ENCODE measurements at regions of chr9 and their contacts with region 1.

Region 1: DNA sequence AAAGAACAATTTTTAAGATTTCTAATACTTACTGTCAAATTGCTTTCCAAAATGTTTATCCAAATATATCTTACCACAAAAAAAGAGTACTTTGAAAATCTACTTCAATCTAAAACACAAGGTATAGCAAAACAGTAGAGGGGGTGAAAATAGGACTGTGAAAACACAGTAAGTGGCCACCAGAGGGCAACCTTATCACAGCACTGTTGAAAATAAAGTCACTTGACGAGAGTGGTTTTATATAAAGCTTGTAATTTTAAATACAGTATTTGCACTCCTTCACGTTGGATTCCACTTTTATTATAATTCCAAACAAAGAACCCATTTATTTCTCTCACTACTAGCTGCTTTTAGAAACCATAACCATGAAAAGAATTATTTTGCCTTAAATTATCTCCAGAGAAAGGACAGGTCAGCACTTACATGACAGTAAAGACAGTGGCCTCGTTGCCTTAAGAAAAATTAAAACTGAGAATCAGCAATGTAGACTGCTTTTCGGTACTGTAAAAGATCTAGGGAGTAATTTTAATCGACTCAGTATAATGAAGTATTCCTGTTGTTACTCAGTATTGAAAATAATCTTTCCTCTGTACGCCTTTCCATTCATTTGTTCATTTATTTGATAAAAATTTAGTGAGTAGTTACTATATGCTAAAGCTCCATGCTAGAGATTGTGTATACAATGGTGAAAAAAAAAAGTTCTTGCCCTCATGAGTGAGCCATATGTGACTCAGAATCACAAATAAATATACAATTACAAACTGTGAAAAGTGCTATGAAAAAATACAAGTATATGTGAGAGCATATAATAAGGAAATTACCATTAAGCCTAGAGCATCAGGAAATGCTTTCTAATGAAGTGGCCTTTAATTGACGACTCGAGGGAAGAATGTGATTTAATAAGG is 40.0 kb upstream of the CDK5RAP2 start:
- DNase-seq: peak; percentile 81
- H3K4me3 ChIP-seq: no peak overlapping the region
- H3K27ac ChIP-seq: no peak overlapping the region
- H3K4me1 ChIP-seq: no peaks in the 10 kb centered on the region
- H3K27me3 ChIP-seq: no peaks in the 10 kb centered on the region
- CTCF ChIP-seq: peak; percentile 67 to 68
- POLR2A ChIP-seq: no peak

Region 2: DNA sequence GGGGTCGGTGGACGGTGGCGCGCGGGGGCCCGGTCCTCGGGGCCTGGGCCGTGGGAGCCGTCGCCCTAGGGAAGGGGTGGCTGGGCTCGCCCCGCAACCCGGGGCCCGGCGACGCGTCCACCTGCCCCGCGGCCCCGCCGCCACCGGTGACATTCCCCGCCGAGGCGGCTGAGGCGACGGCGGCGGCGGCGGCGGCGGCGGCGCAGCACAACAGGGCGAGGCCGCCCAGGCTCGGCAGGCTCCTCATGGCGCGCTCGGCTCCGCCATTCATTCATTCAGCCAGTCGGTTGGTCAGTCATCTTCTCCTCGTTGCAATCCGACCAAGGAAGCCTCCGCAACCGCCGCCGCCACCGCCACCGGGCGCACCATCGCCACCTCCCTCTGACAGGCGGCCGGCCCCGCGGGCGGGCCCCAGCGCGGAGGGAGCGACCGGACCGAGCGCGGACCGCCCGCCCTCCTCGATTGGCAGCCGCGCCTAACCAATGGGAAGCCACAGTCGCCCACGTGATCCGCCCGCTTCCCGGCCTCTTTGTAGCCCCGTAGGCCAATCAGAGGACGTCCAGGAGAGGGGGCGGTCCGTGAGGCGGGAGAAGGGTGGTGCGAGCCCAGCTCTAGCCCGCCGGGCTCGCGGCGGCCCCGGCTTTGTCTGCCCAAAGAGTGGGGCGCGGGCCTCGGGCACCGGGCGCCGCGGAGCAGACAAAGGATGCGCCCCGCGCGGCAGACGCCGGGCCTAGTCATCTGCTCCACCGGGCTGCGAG is 94.3 kb after region 1 on chr9 and contains the start of gene MEGF9:
- CTCF ChIA-PET with region 1: interaction called, 28 read pairs
- POLR2A ChIA-PET with region 1: interaction called, 3 read pairs
- dilution Hi-C with region 1: no loop called
- intact Hi-C with region 1: loop called (anchors 5 kb)
- DNase-seq: peak; percentile 98
- H3K4me3 ChIP-seq: peak within 1 kb of the TSS; percentile 65 to 84 (median 67)
- H3K27ac ChIP-seq: peak within 1 kb of the TSS; percentile 68
- H3K4me1 ChIP-seq: peaks cover 21% of the 10 kb centered on the region
- H3K27me3 ChIP-seq: no peaks in the 10 kb centered on the region
- CTCF ChIP-seq: no peak
- POLR2A ChIP-seq: peak; percentile 81
- total RNA-seq, gene MEGF9: 11.1 and 13.0 TPM in 2 replicates

Region 3: DNA sequence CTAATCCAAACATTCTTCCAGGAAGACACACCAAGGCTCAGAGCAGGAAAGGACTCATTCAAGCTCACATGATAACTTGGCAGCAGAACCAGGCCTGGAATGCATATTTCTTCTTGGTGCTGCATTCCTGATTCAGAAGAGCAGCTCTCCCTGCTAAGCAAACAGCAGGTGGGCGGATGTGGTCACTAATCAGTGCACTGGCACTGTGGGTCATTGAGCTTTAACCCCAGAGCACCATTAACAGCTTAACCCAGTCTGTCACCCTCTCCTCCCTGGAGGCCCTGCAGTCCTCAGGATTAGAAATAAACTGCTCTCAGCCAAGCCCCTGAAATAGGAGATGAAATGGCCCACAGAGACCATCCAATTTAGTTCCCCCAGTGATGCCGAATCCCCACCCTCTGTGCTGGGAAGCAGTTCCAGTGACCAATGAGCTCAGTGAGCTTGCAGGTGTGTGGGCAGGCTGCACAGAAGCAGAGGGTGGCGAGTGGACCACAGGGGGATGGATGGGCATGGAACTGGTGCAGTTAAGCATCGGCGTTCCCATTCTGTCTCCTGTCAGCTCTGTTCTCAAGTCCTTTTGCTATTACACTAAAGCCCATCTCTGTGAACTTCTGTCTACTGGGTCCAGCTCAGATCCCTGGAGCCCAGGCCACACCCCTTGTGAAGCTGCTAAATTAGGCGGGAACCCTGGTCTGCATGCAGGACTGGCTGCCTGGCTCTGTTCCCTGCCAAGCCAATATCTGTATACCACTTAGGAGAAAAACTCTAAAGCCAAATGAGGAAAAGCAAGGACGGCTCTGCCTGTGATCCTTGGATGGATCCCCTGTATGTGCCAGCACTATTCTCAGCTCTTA is 110.9 kb after region 1 on chr9:
- CTCF ChIA-PET with region 1: interaction called, 16 read pairs
- POLR2A ChIA-PET with region 1: no interaction called
- dilution Hi-C with region 1: no loop called
- intact Hi-C with region 1: no loop called
- DNase-seq: peak; percentile 92
- H3K4me3 ChIP-seq: no peak overlapping the region
- H3K27ac ChIP-seq: no peak overlapping the region
- H3K4me1 ChIP-seq: peaks cover 15% of the 10 kb centered on the region
- H3K27me3 ChIP-seq: no peaks in the 10 kb centered on the region
- CTCF ChIP-seq: no peak
- POLR2A ChIP-seq: peak; percentile 38

Region 4: DNA sequence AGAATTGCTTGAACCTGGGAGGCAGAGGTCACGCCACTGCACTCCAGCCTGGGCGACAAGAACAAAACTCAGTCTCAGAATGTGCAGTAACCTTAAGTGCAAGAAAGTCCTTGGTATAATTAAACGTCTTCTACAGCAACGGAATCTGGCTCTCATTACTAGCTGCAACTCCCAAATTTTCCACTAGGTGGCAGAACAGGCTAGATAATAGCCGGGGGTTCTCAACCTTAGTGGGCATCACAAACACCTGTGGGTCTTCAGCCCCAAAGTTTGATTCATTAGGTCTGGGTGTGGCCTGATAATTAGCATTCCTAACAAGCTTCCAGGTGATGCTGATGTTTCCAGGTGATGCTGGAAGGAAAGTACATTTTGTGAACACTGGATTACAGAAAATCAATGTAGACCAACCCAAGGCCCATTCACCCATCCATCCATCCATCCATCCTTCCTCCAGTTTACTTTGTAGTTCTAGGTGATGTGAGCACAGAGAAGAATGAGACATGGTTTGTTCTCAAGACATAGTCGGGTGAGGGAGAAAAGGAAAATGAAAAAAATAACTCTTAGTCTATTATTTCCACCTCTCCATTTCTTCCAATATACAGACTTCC is 135.9 kb after region 1 on chr9:
- CTCF ChIA-PET with region 1: interaction called, 36 read pairs
- POLR2A ChIA-PET with region 1: no interaction called
- dilution Hi-C with region 1: no loop called
- intact Hi-C with region 1: no loop called
- DNase-seq: peak; percentile 65
- H3K4me3 ChIP-seq: no peak overlapping the region
- H3K27ac ChIP-seq: no peak overlapping the region
- H3K4me1 ChIP-seq: no peaks in the 10 kb centered on the region
- H3K27me3 ChIP-seq: no peaks in the 10 kb centered on the region
- CTCF ChIP-seq: peak; percentile 70 to 74
- POLR2A ChIP-seq: no peak

Measured in endothelial cell of umbilical vein (primary cell).